ENCODE measurements at regions of chr4 and their contacts with region 1.

Region 1: GRCh38 chr4:139554893-139555704 is 920 bp downstream of the SETD7 start:
- DNase-seq: peak; percentile 80 to 88 (median 83)
- H3K4me3 ChIP-seq: peak overlapping the region; percentile 73 to 92 (median 78)
- H3K4me3 Mint-ChIP-seq: peak overlapping the region; percentile 88 to 92
- H3K27ac ChIP-seq: peak overlapping the region; percentile 91 to 97
- H3K27ac Mint-ChIP-seq: peak overlapping the region; percentile 92 to 97 (median 97)
- H3K4me1 ChIP-seq: peaks cover 45 to 72% of the 10 kb centered on the region in 2 donors
- H3K4me1 Mint-ChIP-seq: peaks cover 59% of the 10 kb centered on the region
- H3K27me3 ChIP-seq: no peaks in the 10 kb centered on the region
- H3K27me3 Mint-ChIP-seq: peaks cover 0 to 2% (median 0%) of the 10 kb centered on the region in 3 donors
- CTCF ChIP-seq: no peak

Region 2: DNA sequence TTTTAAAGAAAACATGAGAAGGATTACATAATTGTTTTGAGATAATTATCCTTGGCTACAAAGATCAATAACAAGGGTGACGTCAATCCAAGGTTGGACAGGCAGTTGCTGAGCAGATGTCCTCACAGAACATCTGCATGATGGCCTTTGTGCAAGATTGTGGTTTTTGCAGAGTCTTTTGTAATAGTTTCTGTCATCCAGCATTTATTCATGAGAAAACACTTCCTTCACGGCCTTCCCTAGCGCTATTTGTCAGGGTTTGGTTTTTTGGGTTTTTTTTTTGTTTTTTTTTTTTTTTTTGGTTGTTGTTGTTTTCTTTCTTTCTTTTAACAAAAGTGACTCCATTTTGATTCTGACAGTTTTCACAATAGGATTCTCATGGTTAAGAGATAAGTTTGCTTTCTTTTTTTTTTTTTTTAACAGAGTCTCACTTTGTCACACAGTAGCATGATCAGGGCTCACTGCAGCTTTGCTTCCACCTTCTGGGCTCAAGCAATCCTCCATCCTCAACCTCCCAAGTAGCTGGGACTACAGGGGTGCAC is 346.6 kb before region 1 on chr4:
- intact Hi-C with region 1: loop called in 1 of 2 experiments (anchors 10 kb)
- DNase-seq: peak; percentile 94 to 98 (median 98)
- H3K4me3 ChIP-seq: no peak overlapping the region
- H3K4me3 Mint-ChIP-seq: no peak overlapping the region
- H3K27ac ChIP-seq: peak overlapping the region; percentile 91 to 92
- H3K27ac Mint-ChIP-seq: peak overlapping the region; percentile 96 to 99 (median 99)
- H3K4me1 ChIP-seq: peaks cover 39 to 49% of the 10 kb centered on the region in 2 donors
- H3K4me1 Mint-ChIP-seq: peaks cover 39% of the 10 kb centered on the region
- H3K27me3 ChIP-seq: no peaks in the 10 kb centered on the region
- H3K27me3 Mint-ChIP-seq: peaks cover 0 to 2% (median 0%) of the 10 kb centered on the region in 3 donors
- CTCF ChIP-seq: no peak

Region 3: DNA sequence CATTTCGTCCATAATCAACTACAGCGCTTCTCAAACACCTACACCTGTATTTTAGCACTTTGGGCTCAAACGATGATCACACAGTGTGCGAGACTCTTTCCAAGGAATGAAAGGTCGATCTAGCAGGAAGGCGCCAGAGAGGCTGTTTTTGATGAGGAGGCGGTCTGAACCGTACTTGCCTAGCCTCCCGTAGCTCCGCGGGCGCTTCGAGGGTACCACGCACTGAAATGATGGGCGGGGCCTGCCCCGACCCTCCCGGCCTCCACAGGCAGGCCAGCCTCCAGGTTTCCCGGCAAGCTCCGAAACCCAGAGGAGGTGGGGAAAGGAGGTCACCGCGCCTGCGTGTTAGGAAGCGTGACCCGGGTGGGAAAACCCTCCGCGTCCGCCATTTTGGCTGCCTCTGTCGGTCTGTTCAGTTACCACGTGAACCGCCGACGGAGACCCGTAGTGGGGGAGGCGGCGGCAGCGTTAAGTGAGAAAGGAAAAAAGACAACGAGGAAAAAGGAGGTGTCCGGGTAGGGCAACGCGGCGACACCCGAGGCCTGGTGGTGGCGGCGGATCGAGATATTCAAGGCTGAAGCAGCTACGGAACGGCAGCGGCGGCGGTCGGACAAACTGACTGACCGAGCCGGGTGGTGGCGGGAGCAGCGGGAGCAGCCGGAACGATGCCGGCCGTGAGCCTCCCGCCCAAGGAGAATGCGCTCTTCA is 253.8 kb before region 1 on chr4 and contains the start of gene NAA15:
- intact Hi-C with region 1: loop called in 1 of 2 experiments (anchors 10 kb)
- DNase-seq: peak; percentile 93 to 96 (median 94)
- H3K4me3 ChIP-seq: peak within 1 kb of the TSS; percentile 72 to 94 (median 75)
- H3K4me3 Mint-ChIP-seq: peak within 1 kb of the TSS; percentile 99 to 100
- H3K27ac ChIP-seq: peak within 1 kb of the TSS; percentile 89 to 95
- H3K27ac Mint-ChIP-seq: peak within 1 kb of the TSS; percentile 97 to 100 (median 99)
- H3K4me1 ChIP-seq: peaks cover 20 to 48% of the 10 kb centered on the region in 2 donors
- H3K4me1 Mint-ChIP-seq: peaks cover 45% of the 10 kb centered on the region
- H3K27me3 ChIP-seq: no peaks in the 10 kb centered on the region
- H3K27me3 Mint-ChIP-seq: no peaks in the 10 kb centered on the region
- CTCF ChIP-seq: no peak
- polyA plus RNA-seq, gene NAA15: 5.2 to 20.2 (median 8.8) TPM

Region 4: DNA sequence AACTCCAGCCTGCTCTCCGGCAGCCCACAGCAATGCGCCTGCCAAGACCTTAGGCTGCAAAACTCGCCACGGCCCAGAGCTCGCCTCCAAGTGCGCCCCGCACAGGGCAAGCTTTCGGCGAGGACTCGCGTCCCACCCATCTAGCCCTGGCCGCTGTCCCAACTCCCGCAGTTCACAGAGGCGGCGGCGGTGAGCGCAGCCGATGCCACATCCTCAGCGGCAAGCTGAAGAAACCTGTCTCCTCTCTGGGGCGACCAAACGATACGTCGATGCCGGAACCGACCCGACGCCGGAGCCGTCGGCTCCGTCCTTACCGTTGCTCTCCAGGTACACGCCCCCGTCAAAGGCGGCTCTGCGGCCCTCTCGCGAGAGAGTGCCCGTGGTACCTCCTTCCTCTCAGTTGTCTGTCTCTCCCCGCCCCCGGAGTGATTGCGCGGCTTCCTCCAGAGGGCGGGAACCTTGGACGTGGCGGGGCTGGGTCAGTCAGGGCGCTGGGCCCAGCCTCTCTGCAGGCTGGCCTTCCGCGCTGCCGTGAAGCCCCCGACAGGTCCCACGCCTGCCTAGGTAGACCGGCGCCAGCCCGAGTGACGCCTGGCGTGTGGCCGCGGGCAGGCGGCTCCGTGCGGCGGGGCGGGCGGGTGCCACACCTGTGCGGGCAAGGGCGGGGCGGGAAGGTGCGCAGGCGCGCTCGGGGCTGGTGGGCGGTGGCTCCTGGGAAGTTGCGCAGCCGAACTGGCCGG is 101.6 kb before region 1 on chr4:
- intact Hi-C with region 1: loop called in 1 of 2 experiments (anchors 5 kb)
- DNase-seq: peak; percentile 93 to 97 (median 94)
- H3K4me3 ChIP-seq: peak overlapping the region; percentile 74 to 98 (median 94)
- H3K4me3 Mint-ChIP-seq: peak overlapping the region; percentile 96 to 98
- H3K27ac ChIP-seq: peak overlapping the region; percentile 94 to 95
- H3K27ac Mint-ChIP-seq: peak overlapping the region; percentile 95 to 99 (median 98)
- H3K4me1 ChIP-seq: peaks cover 30 to 48% of the 10 kb centered on the region in 2 donors
- H3K4me1 Mint-ChIP-seq: peaks cover 61% of the 10 kb centered on the region
- H3K27me3 ChIP-seq: no peaks in the 10 kb centered on the region
- H3K27me3 Mint-ChIP-seq: peaks cover 0 to 1% (median 0%) of the 10 kb centered on the region in 3 donors
- CTCF ChIP-seq: peak; percentile 30

Region 5: GRCh38 chr4:139593091-139593564 is 38.0 kb after region 1 on chr4:
- intact Hi-C with region 1: no loop called
- DNase-seq: no peak
- H3K4me3 ChIP-seq: no peak overlapping the region
- H3K4me3 Mint-ChIP-seq: no peak overlapping the region
- H3K27ac ChIP-seq: no peak overlapping the region
- H3K27ac Mint-ChIP-seq: no peak overlapping the region
- H3K4me1 ChIP-seq: no peaks in the 10 kb centered on the region
- H3K4me1 Mint-ChIP-seq: no peaks in the 10 kb centered on the region
- H3K27me3 ChIP-seq: peaks cover 2 to 3% of the 10 kb centered on the region in 2 donors
- H3K27me3 Mint-ChIP-seq: peaks cover 0 to 6% (median 3%) of the 10 kb centered on the region in 3 donors
- CTCF ChIP-seq: no peak

Region 6: DNA sequence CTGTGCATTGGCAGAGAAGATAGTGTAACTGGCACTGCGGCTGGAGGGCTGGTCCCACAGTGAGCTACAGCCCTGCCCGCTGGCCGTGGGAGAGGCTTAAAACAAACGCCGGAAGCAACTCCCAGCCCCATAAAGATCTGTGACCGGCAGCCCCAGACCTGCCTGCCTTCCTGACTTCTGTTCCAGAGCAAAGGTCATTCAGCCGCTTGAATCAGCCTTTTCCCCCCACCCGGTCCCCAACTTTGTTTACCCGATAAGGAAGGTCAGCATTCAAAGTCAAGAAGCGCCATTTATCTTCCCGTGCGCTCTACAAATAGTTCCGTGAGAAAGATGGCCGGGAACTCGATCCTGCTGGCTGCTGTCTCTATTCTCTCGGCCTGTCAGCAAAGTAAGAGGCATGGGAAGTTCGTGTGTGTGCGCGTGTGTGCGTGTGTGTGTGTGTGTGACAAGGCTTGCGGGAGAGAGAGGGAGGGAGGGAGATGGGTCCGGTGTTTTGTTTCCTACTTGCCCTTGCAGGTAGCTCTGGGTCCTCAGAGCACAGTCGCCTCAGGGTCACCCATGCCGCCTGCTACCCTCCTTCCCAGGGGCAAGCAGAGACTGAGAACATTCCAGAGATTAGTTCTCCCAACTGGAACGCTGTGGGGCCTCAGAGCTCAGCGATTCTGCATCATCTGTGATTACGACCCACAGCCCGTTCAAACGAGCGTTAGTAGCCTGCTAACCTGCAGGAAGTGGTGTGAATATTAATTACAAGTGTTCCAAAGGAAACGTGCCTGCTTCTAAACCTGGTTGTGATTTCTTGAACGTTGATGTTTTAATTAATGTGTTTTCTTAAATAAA is 110.8 kb after region 1 on chr4 and contains the start of gene MGST2:
- intact Hi-C with region 1: loop called in 1 of 2 experiments (anchors 10 kb)
- DNase-seq: peak in 2 of 3 donors; percentile 21 to 44
- H3K4me3 ChIP-seq: peak within 1 kb of the TSS; percentile 68 to 87 (median 85)
- H3K4me3 Mint-ChIP-seq: peak within 1 kb of the TSS; percentile 96 to 100
- H3K27ac ChIP-seq: peak within 1 kb of the TSS; percentile 85 to 93
- H3K27ac Mint-ChIP-seq: peak within 1 kb of the TSS; percentile 93 to 99 (median 95)
- H3K4me1 ChIP-seq: peaks cover 34 to 44% of the 10 kb centered on the region in 2 donors
- H3K4me1 Mint-ChIP-seq: peaks cover 52% of the 10 kb centered on the region
- H3K27me3 ChIP-seq: no peaks in the 10 kb centered on the region
- H3K27me3 Mint-ChIP-seq: peaks cover 0 to 1% (median 0%) of the 10 kb centered on the region in 3 donors
- CTCF ChIP-seq: no peak
- polyA plus RNA-seq, gene MGST2: 41.7 to 221 (median 153) TPM

Measured in CD14-positive monocyte (primary cell).